CD8-positive, alpha-beta T cell (primary cell): ENCODE measurements at regions of chr14 and their contacts with region 1.

Region 1: GRCh38 chr14:55102141-55102621 is 26.9 kb upstream of the LGALS3 start:
- DNase-seq: peak in 8 of 9 experiments; percentile 25 to 82 (median 58)
- ATAC-seq: peak; percentile 74
- H3K4me3 ChIP-seq: no peak overlapping the region
- H3K4me3 Mint-ChIP-seq: no peak overlapping the region
- H3K27ac ChIP-seq: peak overlapping the region; percentile 18 to 81
- H3K27ac Mint-ChIP-seq: peak overlapping the region; percentile 96
- H3K4me1 ChIP-seq: peaks cover 38% of the 10 kb centered on the region
- H3K4me1 Mint-ChIP-seq: peaks cover 50% of the 10 kb centered on the region
- H3K27me3 ChIP-seq: no peaks in the 10 kb centered on the region
- H3K27me3 Mint-ChIP-seq: no peaks in the 10 kb centered on the region
- CTCF ChIP-seq: no peak

Region 2: GRCh38 chr14:55129428-55130195 is 27.4 kb after region 1 on chr14:
- CTCF ChIA-PET with region 1: interaction called, 3 read pairs
- POLR2A ChIA-PET with region 1: interaction called, 19 read pairs
- intact Hi-C with region 1: loop called (anchors 2 kb)
- DNase-seq: peak in 8 of 9 experiments; percentile 18 to 76 (median 58)
- ATAC-seq: peak; percentile 70
- H3K4me3 ChIP-seq: peak overlapping the region; percentile 46 to 54
- H3K4me3 Mint-ChIP-seq: peak overlapping the region; percentile 72
- H3K27ac ChIP-seq: no peak overlapping the region
- H3K27ac Mint-ChIP-seq: no peak overlapping the region
- H3K4me1 ChIP-seq: peaks cover 8% of the 10 kb centered on the region
- H3K4me1 Mint-ChIP-seq: peaks cover 25% of the 10 kb centered on the region
- H3K27me3 ChIP-seq: no peaks in the 10 kb centered on the region
- H3K27me3 Mint-ChIP-seq: peaks cover 27% of the 10 kb centered on the region
- CTCF ChIP-seq: no peak